PC-3 (cell line): ENCODE measurements at regions of chr3 and their contacts with region 1.

Region 1: DNA sequence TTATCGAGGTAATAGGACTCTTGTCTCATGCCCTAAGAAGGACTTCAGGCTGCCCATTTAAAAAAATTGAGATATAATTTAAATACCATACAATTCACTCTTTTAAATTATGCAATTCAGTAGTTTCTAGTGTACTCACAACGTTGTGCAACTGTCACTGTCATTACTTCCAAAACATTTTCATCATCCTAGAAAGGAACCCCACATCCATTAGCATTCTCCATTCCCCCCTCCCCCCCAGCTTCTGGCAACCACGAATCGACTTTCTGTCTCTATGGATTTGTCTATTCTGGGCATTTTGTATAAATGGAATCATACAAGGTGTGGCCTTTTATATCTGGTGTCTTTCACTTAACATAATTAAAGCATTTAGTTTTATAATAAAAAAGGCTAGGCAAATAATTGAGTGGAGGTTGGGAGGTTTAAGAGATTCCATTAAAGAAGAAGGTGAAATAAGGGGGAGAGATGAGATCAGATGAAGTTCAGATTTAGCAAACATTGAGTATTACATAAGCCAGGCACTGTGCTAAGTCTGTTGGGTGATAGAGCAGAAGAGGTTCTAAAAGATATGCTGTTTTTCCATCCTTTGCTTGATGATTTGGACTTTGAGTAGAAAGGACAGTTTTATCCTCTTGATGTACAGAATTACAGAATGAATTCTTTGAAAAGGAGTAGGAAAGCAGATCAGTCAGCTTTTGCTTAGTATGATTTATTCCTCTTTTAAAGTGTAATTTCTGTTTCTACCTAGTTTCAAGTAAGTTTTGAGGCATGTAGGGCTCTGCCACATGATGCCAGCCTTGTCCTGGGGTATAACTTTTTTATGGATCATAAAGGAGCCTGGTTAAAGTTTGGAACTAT is 36.3 kb downstream of the UBE2E2 start:
- DNase-seq: no peak
- ATAC-seq: 0 out of 2 replicates have a peak, but pooled peaks have one; percentile 21
- H3K4me3 ChIP-seq: no peak overlapping the region
- H3K27ac ChIP-seq: no peak overlapping the region
- H3K4me1 ChIP-seq: peaks cover 21% of the 10 kb centered on the region
- H3K27me3 ChIP-seq: no peaks in the 10 kb centered on the region
- CTCF ChIP-seq: no peak

Region 2: GRCh38 chr3:23219117-23219516 is 20.3 kb before region 1 on chr3:
- CTCF ChIA-PET with region 1: no interaction called
- POLR2A ChIA-PET with region 1: interaction called, 3 read pairs
- intact Hi-C with region 1: loop called (anchors 1 kb)
- DNase-seq: peak; percentile 41
- ATAC-seq: peak; percentile 57
- H3K4me3 ChIP-seq: no peak overlapping the region
- H3K27ac ChIP-seq: no peak overlapping the region
- H3K4me1 ChIP-seq: peaks cover 27% of the 10 kb centered on the region
- H3K27me3 ChIP-seq: no peaks in the 10 kb centered on the region
- CTCF ChIP-seq: no peak

Region 3: GRCh38 chr3:23288286-23288685 is 48.8 kb after region 1 on chr3:
- CTCF ChIA-PET with region 1: no interaction called
- POLR2A ChIA-PET with region 1: interaction called, 23 read pairs
- intact Hi-C with region 1: no loop called
- DNase-seq: peak; percentile 26
- ATAC-seq: no peak
- H3K4me3 ChIP-seq: no peak overlapping the region
- H3K27ac ChIP-seq: no peak overlapping the region
- H3K4me1 ChIP-seq: no peaks in the 10 kb centered on the region
- H3K27me3 ChIP-seq: no peaks in the 10 kb centered on the region
- CTCF ChIP-seq: no peak

Region 4: GRCh38 chr3:23331141-23331935 is 91.9 kb after region 1 on chr3:
- CTCF ChIA-PET with region 1: no interaction called
- POLR2A ChIA-PET with region 1: no interaction called
- intact Hi-C with region 1: loop called (anchors 5 kb)
- DNase-seq: no peak
- ATAC-seq: no peak
- H3K4me3 ChIP-seq: no peak overlapping the region
- H3K27ac ChIP-seq: no peak overlapping the region
- H3K4me1 ChIP-seq: peaks cover 31% of the 10 kb centered on the region
- H3K27me3 ChIP-seq: no peaks in the 10 kb centered on the region
- CTCF ChIP-seq: no peak